Mammary epithelial cell (primary cell): ENCODE measurements at regions of chr3 and their contacts with region 1.

Region 1: DNA sequence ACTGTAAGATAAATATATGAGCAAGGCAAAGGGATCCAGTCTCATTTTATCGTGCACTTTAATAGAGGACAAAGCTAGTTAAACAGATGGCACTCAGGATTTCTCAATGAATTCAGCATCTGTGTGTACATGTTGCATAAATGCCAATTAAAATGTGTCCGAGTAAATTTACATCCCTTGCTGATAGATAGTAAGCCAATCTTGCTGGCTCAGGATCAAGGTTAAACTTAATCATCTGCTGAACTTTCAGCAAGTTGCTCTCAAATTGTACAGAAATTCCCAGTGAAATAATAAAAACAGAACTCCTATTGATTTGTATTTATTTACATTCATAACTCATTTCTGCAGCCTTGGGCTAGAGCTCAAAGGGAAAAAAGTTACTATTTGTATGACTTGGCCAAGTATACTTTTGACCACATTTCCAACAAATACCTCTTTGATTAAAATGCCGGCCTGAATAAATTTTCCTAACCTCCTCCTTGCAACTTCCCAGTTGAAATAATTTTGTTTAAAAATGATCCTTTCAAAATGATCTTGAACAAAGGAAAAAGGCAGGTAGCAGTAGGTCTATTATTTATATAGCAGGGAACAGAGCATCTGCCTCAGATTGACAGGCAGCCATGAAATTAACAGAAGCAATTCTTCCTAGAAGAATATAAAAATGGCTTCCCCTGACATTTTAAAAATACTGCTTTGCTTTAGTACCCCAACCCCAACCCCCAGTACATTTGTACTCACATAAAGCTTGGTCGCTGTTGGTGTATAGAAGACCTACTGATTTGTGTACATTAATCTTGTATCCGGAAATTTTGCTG is 1001.9 kb downstream of the ROBO1 start:
- DNase-seq: no peak
- H3K4me3 ChIP-seq: no peak overlapping the region
- H3K27ac ChIP-seq: no peak overlapping the region
- H3K4me1 ChIP-seq: no peaks in the 10 kb centered on the region
- H3K27me3 ChIP-seq: no peaks in the 10 kb centered on the region
- CTCF ChIP-seq: no peak

Region 2: DNA sequence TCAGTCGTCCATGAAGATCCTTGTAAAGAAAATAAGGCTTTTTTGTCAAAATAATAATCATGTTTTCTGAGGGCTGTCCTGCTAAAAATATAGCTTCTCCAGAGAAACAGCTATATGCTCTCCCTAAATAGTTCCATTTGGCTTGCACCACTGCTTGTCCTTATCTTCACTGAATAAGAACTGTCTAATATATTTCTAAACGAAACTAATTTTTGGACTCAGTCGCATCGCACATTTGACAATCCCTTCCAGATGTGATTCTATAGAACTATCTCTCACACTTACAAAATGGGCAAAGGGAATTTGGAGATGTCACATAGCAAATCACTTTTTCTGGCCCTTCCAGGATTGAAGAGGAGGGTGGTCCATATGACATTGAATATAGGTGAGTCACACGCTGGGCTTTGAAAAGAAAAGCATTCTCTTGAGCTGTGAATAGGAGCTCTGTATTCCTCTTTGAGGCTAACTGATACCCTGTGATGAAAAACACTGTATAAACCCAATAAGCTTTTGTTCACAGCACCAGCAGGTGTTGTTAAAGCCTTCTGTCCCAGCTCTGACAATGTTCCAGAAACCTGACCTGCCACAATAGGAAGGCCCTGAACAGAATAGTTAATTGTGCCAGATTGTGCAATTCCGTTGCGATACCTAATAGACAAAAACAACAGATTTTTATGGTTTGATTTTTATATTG is 581.8 kb before region 1 on chr3:
- CTCF ChIA-PET with region 1: no interaction called
- dilution Hi-C with region 1: no loop called
- in situ Hi-C with region 1: no loop called
- intact Hi-C with region 1: loop called (anchors 10 kb)
- DNase-seq: no peak
- H3K4me3 ChIP-seq: no peak overlapping the region
- H3K27ac ChIP-seq: no peak overlapping the region
- H3K4me1 ChIP-seq: no peaks in the 10 kb centered on the region
- H3K27me3 ChIP-seq: no peaks in the 10 kb centered on the region
- CTCF ChIP-seq: no peak

Region 3: DNA sequence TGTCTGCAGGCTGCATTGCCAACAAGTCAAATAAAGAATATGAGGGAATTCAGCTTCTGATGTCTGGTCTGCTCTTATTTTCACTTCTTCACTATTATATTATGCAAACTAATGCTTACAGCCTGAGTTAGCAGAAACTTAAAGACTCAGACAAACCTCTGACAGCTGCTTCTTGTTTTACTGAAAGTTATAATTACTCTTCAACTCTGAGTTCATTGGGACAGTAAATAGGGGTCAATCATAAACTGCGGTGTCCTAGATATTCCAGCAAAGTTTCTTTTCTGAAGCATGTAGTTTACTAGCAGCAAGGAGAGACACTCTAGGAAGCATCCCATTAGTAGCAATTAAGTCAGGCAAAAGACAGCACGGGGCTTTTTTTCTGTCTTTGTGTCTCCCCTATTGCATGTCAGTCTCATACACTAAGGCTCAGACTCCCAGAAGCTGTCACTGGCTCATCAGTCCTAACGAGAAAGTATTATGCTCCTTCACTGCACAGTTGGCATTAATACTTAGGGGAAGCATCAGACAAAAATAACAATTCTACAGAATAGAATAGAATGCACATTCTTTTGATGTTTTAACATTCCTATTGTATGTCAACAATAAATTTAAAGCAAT is 58.9 kb before region 1 on chr3:
- CTCF ChIA-PET with region 1: no interaction called
- dilution Hi-C with region 1: no loop called
- in situ Hi-C with region 1: no loop called
- intact Hi-C with region 1: no loop called
- DNase-seq: no peak
- H3K4me3 ChIP-seq: no peak overlapping the region
- H3K27ac ChIP-seq: no peak overlapping the region
- H3K4me1 ChIP-seq: no peaks in the 10 kb centered on the region
- H3K27me3 ChIP-seq: no peaks in the 10 kb centered on the region
- CTCF ChIP-seq: no peak